HEK293 (cell line): ENCODE measurements at regions of chr18 and their contacts with region 1.

Region 1: DNA sequence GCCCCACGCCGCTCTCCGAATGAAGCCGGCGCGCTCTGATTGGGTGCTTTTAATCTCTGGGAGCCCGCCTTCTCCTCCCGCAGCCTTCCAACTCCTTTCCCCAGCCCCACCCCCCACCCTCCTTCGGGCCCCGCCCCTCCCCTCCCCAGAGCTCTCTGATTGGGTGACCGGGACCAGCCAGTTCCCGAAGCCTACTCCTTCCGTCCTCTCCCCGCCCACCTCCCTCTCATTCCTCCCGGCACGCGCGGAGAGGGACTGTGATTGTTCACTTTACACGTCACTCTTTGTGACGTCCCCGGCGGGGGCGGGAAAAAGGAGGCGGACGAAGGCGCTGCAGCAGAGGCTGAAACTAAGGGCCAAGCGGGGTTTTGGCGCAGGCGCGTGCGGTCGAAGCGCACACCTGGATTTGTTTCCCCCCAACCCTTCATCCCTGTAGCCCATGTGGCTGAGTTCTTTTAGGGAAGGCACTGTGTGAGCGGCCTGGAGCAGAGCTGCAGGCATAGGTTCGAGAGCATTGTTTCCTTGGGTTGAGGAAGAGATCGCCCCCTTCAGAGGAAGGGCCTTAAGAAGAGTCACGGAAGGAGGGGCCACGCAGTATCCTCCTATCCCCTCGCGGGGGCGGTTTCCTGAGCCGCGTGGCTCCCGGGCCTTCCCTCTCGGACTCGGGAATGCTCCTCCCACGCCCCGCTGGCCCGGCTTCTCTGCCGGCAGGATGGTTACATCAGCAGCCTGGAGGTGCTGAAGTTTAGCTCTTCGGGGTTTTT is at the start of gene MEX3C:
- H3K4me3 ChIP-seq: peak within 1 kb of the TSS; percentile 88
- H3K27ac ChIP-seq: peak within 1 kb of the TSS; percentile 96
- H3K4me1 ChIP-seq: peaks cover 14% of the 10 kb centered on the region
- CTCF ChIP-seq: peak; percentile 94

Region 2: DNA sequence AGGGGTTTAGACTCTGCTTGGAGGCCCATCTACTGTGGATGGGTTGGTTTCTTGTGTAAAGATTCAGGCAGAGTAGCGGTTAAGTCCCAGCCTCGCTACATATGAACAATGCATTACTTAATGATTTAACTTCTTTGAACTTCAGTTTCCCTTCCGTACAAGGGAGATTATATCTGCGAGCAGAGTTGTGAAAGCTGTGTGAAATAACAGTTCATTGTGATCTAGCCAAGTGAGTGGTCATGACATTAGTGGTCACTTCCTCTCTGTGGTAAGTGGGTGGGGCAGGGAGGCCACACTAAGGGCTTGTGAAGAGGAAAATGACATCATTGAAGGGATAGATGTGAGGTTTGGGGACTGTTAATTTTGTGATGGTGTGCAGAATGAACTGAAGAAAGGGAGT is 13.7 kb after region 1 on chr18:
- CTCF ChIA-PET with region 1: no interaction called
- POLR2A ChIA-PET with region 1: interaction called, 13 read pairs
- H3K4me3 ChIP-seq: no peak overlapping the region
- H3K27ac ChIP-seq: no peak overlapping the region
- H3K4me1 ChIP-seq: no peaks in the 10 kb centered on the region
- CTCF ChIP-seq: no peak

Region 3: DNA sequence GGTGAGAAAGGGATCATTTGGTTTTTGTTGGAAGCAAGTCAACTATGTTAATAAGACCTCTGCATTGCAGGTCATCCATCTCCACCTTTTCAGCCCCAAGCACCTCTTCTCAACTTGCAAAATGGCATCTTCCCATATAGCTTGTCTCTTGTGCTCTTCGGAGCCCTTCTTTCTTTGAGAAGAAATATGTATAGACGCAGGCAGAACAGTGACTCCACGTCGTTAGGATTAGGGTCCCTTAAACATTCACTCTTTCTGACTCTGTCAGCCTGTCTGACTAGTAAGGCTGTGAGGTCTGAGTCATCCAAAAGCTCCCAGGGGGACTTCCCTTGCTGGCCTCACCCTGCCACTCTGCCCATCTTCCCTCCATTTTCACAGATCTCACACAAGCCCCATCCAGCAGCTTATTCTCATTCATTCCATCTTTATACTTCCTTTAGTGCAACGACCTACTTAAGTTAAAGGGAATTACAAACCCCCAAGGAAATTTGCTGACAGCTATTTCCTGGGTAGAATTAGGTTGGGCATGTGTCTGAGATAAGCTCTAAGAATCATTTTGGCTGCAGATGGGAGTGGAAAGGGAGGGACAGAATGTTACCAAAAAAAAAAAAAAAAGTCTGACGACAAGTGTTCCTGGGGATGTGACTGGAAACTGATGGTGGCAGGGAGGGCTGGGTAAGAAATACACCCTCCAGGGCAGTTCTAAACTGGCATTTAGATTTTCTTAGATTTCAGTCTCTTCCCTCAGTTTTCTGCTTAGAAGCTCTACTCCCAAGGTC is 37.4 kb after region 1 on chr18:
- CTCF ChIA-PET with region 1: interaction called, 3 read pairs
- POLR2A ChIA-PET with region 1: interaction called, 32 read pairs
- H3K4me3 ChIP-seq: no peak overlapping the region
- H3K27ac ChIP-seq: peak overlapping the region; percentile 56; the same call in 1 of the 2 replicates
- H3K4me1 ChIP-seq: peaks cover 19% of the 10 kb centered on the region
- CTCF ChIP-seq: no peak

Region 4: DNA sequence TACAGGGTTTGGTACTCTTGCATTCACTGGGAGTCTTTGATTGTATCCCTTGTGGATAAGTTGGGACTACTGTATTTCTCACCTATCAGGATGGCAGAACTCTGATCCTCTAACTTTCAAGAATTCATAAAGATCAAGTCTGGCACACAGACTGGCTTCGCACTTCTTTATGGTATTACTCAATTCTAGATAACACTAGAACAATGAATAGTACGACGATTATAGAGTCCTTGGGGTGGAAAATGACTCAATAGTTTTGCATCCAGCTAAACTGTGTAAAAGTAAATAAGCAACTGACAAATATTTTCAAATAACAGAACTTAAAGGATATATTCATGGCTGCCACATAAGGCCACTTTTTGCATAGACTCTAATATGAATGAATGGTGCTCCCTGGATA is 103.1 kb after region 1 on chr18:
- CTCF ChIA-PET with region 1: no interaction called
- POLR2A ChIA-PET with region 1: no interaction called
- H3K4me3 ChIP-seq: no peak overlapping the region
- H3K27ac ChIP-seq: no peak overlapping the region
- H3K4me1 ChIP-seq: no peaks in the 10 kb centered on the region
- CTCF ChIP-seq: no peak

Region 5: GRCh38 chr18:51398104-51398503 is 200.3 kb after region 1 on chr18:
- CTCF ChIA-PET with region 1: no interaction called
- POLR2A ChIA-PET with region 1: no interaction called
- H3K4me3 ChIP-seq: no peak overlapping the region
- H3K27ac ChIP-seq: no peak overlapping the region
- H3K4me1 ChIP-seq: no peaks in the 10 kb centered on the region
- CTCF ChIP-seq: no peak

Region 6: DNA sequence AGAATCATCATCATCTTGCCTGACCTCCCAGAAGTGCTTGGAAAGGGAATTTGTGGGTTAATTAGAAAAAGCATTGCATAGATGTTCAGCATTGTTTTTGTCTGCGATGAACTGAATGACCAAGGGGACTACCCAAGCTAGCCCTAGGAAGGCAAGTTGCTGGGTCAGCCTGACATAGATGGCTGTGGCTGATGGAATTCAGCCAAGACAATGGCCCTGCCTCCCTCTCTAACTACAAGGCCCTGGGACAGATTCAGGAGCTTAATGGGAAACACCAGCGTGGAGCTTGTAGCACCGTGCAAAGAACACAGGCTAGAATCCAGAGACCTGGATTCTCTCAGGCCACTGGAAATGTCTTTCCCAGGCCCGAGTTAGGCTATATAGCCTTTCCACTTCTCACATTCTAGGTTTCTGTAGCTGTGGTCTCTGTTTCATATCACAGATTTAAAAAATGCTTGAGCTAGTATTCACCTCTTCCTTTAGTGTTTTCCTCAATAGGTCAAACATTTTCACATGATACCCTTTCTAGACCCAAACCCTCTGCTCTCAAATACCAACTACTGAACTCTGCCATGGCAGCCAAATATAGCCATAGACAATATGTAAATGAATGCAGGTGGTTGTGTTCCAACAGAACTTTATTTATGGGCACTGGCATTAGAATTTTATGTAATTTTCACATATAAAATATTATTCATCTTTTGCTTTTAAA is 294.0 kb after region 1 on chr18:
- CTCF ChIA-PET with region 1: no interaction called
- POLR2A ChIA-PET with region 1: no interaction called
- H3K4me3 ChIP-seq: no peak overlapping the region
- H3K27ac ChIP-seq: no peak overlapping the region
- H3K4me1 ChIP-seq: no peaks in the 10 kb centered on the region
- CTCF ChIP-seq: no peak